ENCODE measurements at regions of chr14 and their contacts with region 1.

Region 1: GRCh38 chr14:70726651-70727375 is 82.5 kb downstream of the MAP3K9 start:
- DNase-seq: no peak
- H3K4me3 ChIP-seq: no peak overlapping the region
- H3K27ac ChIP-seq: no peak overlapping the region
- H3K4me1 ChIP-seq: no peaks in the 10 kb centered on the region
- H3K27me3 ChIP-seq: no peaks in the 10 kb centered on the region
- CTCF ChIP-seq: no peak
- POLR2A ChIP-seq: no peak

Region 2: GRCh38 chr14:69268763-69269162 is 1458.0 kb before region 1 on chr14:
- intact Hi-C with region 1: loop called (anchors 5 kb)
- DNase-seq: no peak
- H3K4me3 ChIP-seq: no peak overlapping the region
- H3K27ac ChIP-seq: no peak overlapping the region
- H3K4me1 ChIP-seq: no peaks in the 10 kb centered on the region
- H3K27me3 ChIP-seq: no peaks in the 10 kb centered on the region
- CTCF ChIP-seq: no peak
- POLR2A ChIP-seq: no peak

Measured in breast epithelium (tissue), 4 donors.